ENCODE measurements at regions of chr11 and their contacts with region 1.

Region 1: DNA sequence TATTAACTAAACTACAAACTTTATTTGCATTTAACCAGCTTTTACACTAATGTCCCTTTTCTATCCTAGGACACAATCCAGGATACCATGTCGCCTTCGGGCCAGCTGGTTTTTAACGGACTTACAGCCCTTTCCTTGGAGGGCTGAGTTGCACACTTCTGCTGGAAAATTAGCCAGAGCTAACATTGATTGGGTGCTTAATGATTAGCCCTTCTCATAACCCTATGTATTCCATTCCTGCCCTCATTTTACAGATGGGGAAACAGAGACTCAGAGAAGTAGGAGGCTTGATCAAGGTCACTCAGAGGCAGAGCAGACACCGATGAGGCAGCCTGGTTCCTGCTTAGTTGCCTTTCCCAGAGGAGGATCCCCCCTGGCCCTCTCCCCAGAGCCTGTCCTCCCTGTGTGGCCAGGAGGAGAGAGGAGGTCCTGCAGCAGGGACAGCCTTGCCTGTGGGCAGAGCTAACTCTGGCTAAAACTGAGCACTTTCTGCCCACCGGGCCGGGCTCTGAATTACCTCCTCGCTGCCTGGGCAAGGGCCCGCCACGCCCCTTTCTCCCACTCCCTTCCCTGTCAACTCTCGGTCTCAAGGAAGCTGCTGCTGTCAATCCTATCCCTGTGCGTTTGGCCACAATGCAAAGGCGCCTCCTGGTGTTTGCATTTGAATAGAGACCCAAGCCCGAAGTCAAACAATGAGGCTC is 59.6 kb upstream of the PAX6 start:
- DNase-seq: peak; percentile 43
- ATAC-seq: peak; percentile 93
- H3K4me3 ChIP-seq: peak overlapping the region in 1 of 3 experiments; percentile 21; a peak in 1 of 6 replicates
- H3K27ac ChIP-seq: no peak overlapping the region
- H3K4me1 ChIP-seq: peaks cover 4% of the 10 kb centered on the region; the same call in 1 of the 2 replicates
- H3K27me3 ChIP-seq: peaks cover 0 to 23% of the 10 kb centered on the region in 2 experiments; a peak in 1 of 5 replicates
- CTCF ChIP-seq: peak; percentile 85
- EP300 ChIP-seq: no peak
- POLR2A ChIP-seq: no peak
- RAD21 ChIP-seq: peak; percentile 77

Region 2: GRCh38 chr11:31240338-31240904 is 630.3 kb before region 1 on chr11:
- CTCF ChIA-PET with region 1: interaction called, 9 read pairs
- POLR2A ChIA-PET with region 1: no interaction called
- in situ Hi-C with region 1: loop called (anchors 10 kb)
- intact Hi-C with region 1: loop called (anchors 1 kb)
- DNase-seq: peak; percentile 59
- ATAC-seq: peak; percentile 85
- H3K4me3 ChIP-seq: no peak overlapping the region
- H3K27ac ChIP-seq: no peak overlapping the region
- H3K4me1 ChIP-seq: no peaks in the 10 kb centered on the region
- H3K27me3 ChIP-seq: no peaks in the 10 kb centered on the region
- CTCF ChIP-seq: peak; percentile 76
- EP300 ChIP-seq: no peak
- POLR2A ChIP-seq: no peak
- RAD21 ChIP-seq: no peak

Region 3: GRCh38 chr11:31340903-31341572 is 529.7 kb before region 1 on chr11:
- CTCF ChIA-PET with region 1: no interaction called
- POLR2A ChIA-PET with region 1: no interaction called
- in situ Hi-C with region 1: no loop called
- intact Hi-C with region 1: loop called (anchors 1 kb)
- DNase-seq: peak; percentile 45
- ATAC-seq: peak; percentile 88
- H3K4me3 ChIP-seq: no peak overlapping the region
- H3K27ac ChIP-seq: no peak overlapping the region
- H3K4me1 ChIP-seq: no peaks in the 10 kb centered on the region
- H3K27me3 ChIP-seq: no peaks in the 10 kb centered on the region
- CTCF ChIP-seq: peak; percentile 51
- EP300 ChIP-seq: no peak
- POLR2A ChIP-seq: no peak
- RAD21 ChIP-seq: no peak

Region 4: DNA sequence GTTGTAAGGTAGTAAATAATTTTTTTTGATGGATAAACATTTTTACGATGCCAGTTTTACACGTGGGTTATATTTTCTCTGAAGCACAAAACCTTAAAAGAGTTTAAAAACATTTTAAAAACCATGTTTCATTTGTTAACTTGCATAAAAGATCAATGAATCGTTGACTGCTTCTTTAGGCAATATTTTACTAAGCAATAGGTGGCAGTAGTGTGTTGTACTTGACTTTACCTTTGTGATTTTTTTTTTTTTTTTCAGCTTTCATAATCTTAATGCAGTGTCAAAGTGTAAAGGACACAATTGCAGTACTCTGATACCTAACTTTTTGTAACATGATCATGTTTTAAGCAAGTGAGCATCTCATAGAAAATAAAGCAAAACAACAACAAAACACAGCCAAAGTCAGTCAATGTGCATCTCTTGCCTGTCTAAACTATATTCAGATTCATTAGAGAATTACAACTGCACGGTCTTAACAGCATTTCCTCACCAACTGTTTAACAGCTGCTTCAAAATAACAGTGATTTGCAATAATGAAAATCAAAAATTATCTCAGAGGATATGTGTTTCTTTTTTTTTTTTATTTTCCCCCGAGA is 473.4 kb before region 1 on chr11:
- CTCF ChIA-PET with region 1: interaction called, 26 read pairs
- POLR2A ChIA-PET with region 1: no interaction called
- in situ Hi-C with region 1: loop called (anchors 5 kb)
- intact Hi-C with region 1: loop called (anchors 1 kb)
- DNase-seq: peak; percentile 18
- ATAC-seq: peak; percentile 56; the same call in 2 of the 3 replicates
- H3K4me3 ChIP-seq: no peak overlapping the region
- H3K27ac ChIP-seq: no peak overlapping the region
- H3K4me1 ChIP-seq: no peaks in the 10 kb centered on the region
- H3K27me3 ChIP-seq: no peaks in the 10 kb centered on the region
- CTCF ChIP-seq: peak; percentile 66
- EP300 ChIP-seq: no peak
- POLR2A ChIP-seq: no peak
- RAD21 ChIP-seq: no peak

Region 5: DNA sequence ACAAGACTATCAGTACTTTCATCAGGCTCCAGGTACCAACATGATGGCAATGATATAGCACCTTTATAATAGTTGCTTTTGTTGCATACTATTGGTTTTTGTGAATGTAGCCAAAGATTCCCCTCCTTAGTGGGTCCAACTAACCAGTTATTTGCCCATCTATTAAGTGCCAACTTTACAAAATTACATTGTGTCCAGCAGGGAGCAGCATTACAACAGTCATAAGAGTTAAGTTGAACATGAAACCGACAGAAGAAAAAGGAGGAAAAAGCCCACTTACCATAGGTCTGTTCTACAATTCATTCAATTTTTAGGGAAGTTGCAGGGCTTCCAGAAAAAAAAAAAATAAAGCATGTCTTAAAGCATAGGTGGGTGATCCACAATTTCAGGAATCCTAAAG is 382.9 kb before region 1 on chr11:
- CTCF ChIA-PET with region 1: interaction called, 8 read pairs
- POLR2A ChIA-PET with region 1: no interaction called
- in situ Hi-C with region 1: loop called (anchors 5 kb)
- intact Hi-C with region 1: loop called (anchors 1 kb)
- DNase-seq: peak; percentile 53
- ATAC-seq: peak; percentile 76
- H3K4me3 ChIP-seq: no peak overlapping the region
- H3K27ac ChIP-seq: no peak overlapping the region
- H3K4me1 ChIP-seq: no peaks in the 10 kb centered on the region
- H3K27me3 ChIP-seq: no peaks in the 10 kb centered on the region
- CTCF ChIP-seq: peak; percentile 49
- EP300 ChIP-seq: no peak
- POLR2A ChIP-seq: no peak
- RAD21 ChIP-seq: no peak

Region 6: DNA sequence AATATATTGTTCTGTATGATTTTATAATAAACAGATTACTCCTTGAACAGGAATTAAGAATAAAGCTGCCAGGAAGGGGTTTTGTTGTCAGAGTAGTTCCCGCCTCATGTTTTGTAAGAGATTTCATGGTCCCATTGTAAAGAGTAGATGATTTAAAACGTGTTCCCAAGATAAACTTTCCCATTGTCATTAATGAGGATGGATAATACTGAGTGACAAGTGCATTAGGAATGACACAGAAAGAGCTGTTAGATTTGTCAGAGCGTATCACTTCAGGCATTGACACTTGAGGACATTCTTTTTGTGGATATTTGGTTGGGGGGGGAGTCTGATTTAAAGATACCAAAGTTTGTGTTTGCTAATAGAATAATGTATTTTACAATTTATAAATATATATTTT is 206.6 kb before region 1 on chr11:
- CTCF ChIA-PET with region 1: no interaction called
- POLR2A ChIA-PET with region 1: no interaction called
- in situ Hi-C with region 1: no loop called
- intact Hi-C with region 1: no loop called
- DNase-seq: no peak
- ATAC-seq: no peak
- H3K4me3 ChIP-seq: no peak overlapping the region
- H3K27ac ChIP-seq: no peak overlapping the region
- H3K4me1 ChIP-seq: no peaks in the 10 kb centered on the region
- H3K27me3 ChIP-seq: no peaks in the 10 kb centered on the region
- CTCF ChIP-seq: no peak
- EP300 ChIP-seq: no peak
- POLR2A ChIP-seq: no peak
- RAD21 ChIP-seq: no peak

Region 7: GRCh38 chr11:31810779-31811647 is 59.7 kb before region 1 on chr11 and contains the start of gene PAX6:
- CTCF ChIA-PET with region 1: no interaction called
- POLR2A ChIA-PET with region 1: no interaction called
- in situ Hi-C with region 1: no loop called
- intact Hi-C with region 1: loop called (anchors 5 kb)
- DNase-seq: peak; percentile 51
- ATAC-seq: peak; percentile 29
- H3K4me3 ChIP-seq: peak within 1 kb of the TSS; percentile 47 to 70 (median 57)
- H3K27ac ChIP-seq: no peak within 1 kb of the TSS
- H3K4me1 ChIP-seq: peaks cover 60% of the 10 kb centered on the region
- H3K27me3 ChIP-seq: peaks cover 27 to 88% of the 10 kb centered on the region in 2 experiments
- CTCF ChIP-seq: no peak
- EP300 ChIP-seq: no peak
- POLR2A ChIP-seq: no peak
- RAD21 ChIP-seq: no peak
- total RNA-seq, gene PAX6: 0.15 TPM in 1 of 2 replicates, not detected in the other

Measured in HepG2 (cell line).